CD4-positive, alpha-beta memory T cell (primary cell): ENCODE measurements at regions of chr16 and their contacts with region 1.

Region 1: GRCh38 chr16:56994311-56994710 is 5.0 kb downstream of the NLRC5 start:
- DNase-seq: no peak
- H3K4me3 ChIP-seq: peak overlapping the region in 1 of 2 donors; percentile 42
- H3K4me3 Mint-ChIP-seq: peak overlapping the region; percentile 70 to 94 (median 78)
- H3K27ac ChIP-seq: peak overlapping the region; percentile 79
- H3K27ac Mint-ChIP-seq: peak overlapping the region; percentile 83 to 98 (median 90)
- H3K4me1 ChIP-seq: peaks cover 78% of the 10 kb centered on the region
- H3K4me1 Mint-ChIP-seq: peaks cover 57 to 96% (median 70%) of the 10 kb centered on the region in 4 donors
- H3K27me3 ChIP-seq: no peaks in the 10 kb centered on the region
- H3K27me3 Mint-ChIP-seq: no peaks in the 10 kb centered on the region

Region 2: GRCh38 chr16:56898847-56899246 is 95.5 kb before region 1 on chr16:
- CTCF ChIA-PET with region 1: no interaction called
- POLR2A ChIA-PET with region 1: no interaction called
- intact Hi-C with region 1: no loop called
- DNase-seq: peak in 3 of 5 donors; percentile 3 to 10 (median 7)
- H3K4me3 ChIP-seq: no peak overlapping the region
- H3K4me3 Mint-ChIP-seq: peak overlapping the region in 2 of 8 donors; percentile 42 to 50
- H3K27ac ChIP-seq: no peak overlapping the region
- H3K27ac Mint-ChIP-seq: peak overlapping the region in 5 of 7 donors; percentile 47 to 86 (median 63)
- H3K4me1 ChIP-seq: peaks cover 13% of the 10 kb centered on the region
- H3K4me1 Mint-ChIP-seq: peaks cover 8 to 19% (median 15%) of the 10 kb centered on the region in 4 donors
- H3K27me3 ChIP-seq: no peaks in the 10 kb centered on the region
- H3K27me3 Mint-ChIP-seq: peaks cover 0 to 2% of the 10 kb centered on the region in 2 donors

Region 3: GRCh38 chr16:56950881-56951771 is 43.2 kb before region 1 on chr16:
- CTCF ChIA-PET with region 1: no interaction called
- POLR2A ChIA-PET with region 1: no interaction called
- intact Hi-C with region 1: no loop called
- DNase-seq: peak; percentile 39 to 57 (median 43)
- H3K4me3 ChIP-seq: no peak overlapping the region
- H3K4me3 Mint-ChIP-seq: no peak overlapping the region
- H3K27ac ChIP-seq: no peak overlapping the region
- H3K27ac Mint-ChIP-seq: peak overlapping the region; percentile 11 to 70 (median 25)
- H3K4me1 ChIP-seq: no peaks in the 10 kb centered on the region
- H3K4me1 Mint-ChIP-seq: peaks cover 5 to 13% (median 8%) of the 10 kb centered on the region in 4 donors
- H3K27me3 ChIP-seq: no peaks in the 10 kb centered on the region
- H3K27me3 Mint-ChIP-seq: no peaks in the 10 kb centered on the region

Region 4: GRCh38 chr16:57029161-57030160 is 35.1 kb after region 1 on chr16:
- CTCF ChIA-PET with region 1: interaction called, 4 read pairs
- POLR2A ChIA-PET with region 1: interaction called, 64 read pairs
- intact Hi-C with region 1: no loop called
- DNase-seq: no peak
- H3K4me3 ChIP-seq: no peak overlapping the region
- H3K4me3 Mint-ChIP-seq: peak overlapping the region in 1 of 8 donors; percentile 4
- H3K27ac ChIP-seq: no peak overlapping the region
- H3K27ac Mint-ChIP-seq: peak overlapping the region; percentile 29 to 87 (median 78)
- H3K4me1 ChIP-seq: peaks cover 82% of the 10 kb centered on the region
- H3K4me1 Mint-ChIP-seq: peaks cover 31 to 91% (median 63%) of the 10 kb centered on the region in 4 donors
- H3K27me3 ChIP-seq: no peaks in the 10 kb centered on the region
- H3K27me3 Mint-ChIP-seq: no peaks in the 10 kb centered on the region